Posterior vena cava (tissue), 2 donors: ENCODE measurements at regions of chr2 and their contacts with region 1.

Region 1: GRCh38 chr2:190547886-190548285 is 13.4 kb upstream of the NEMP2 start:
- DNase-seq: no peak

Region 2: DNA sequence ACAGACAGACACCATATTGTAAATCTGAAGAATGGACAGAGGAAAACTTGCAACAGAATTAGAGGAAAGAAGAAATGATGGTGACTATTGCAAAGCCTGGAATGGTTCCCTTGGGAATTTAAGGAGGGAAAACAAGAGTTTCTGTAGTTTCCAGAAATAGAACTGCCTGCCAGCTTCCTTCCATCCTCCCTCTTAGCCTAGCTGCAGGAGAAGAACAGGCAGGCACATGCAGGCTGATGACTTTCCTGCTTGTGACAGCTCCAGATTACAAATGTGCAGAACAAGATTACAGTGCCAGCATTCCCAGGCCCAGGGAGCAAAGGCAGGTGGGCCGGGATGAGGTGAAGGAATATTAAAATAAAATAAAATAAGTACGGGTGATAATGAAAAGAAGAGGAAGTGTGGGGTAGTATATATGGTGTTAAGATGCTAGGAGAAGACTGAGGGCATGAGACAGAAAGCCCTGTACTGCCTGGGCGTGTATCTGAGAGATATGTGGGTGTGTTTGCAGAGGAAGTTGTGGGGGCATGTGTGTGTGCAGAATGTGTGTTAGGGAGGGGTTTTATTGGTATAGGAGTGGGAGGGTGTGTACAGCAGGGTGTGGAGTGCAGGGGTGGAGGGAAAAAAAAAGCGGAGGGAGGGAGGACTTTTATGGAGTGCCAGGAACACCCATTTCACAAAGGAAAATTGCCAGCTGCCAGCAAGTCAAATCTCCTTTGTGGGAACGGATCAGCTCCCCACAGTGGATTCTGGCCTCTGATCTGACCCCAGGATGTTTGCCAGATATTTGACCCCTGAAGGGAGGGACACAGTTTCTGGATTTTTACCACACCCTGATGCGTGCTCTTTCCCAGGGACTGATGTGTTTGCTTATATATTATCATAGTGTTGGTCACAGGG is 30.5 kb after region 1 on chr2:
- intact Hi-C with region 1: loop called in 1 of 2 experiments (anchors 1 kb)
- DNase-seq: no peak